ENCODE measurements at regions of chr3 and their contacts with region 1.

Region 1: DNA sequence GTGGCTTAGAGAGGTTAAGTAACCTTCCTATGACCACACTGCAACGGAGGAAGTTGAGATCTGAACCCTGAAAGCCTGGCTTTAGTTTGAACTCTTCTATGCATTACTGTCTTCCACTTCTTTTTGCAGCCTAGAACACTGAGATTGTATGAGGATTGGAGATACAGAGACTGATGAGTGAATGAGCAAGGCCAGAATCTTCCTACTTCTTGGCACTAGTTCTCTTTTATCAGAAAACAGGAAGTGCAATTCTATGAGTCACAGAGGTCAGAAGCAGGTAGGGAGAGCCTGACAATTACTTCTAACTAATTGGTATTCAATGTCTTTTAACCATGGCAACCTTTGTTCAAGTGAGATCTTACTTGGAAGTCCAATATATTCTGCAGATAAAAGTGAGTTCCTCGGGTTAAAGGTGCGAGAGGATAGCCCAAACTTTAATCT is 219.0 kb downstream of the SHQ1 start:
- DNase-seq: no peak
- H3K4me3 Mint-ChIP-seq: peak overlapping the region; percentile 5
- H3K27ac Mint-ChIP-seq: peak overlapping the region; percentile 86
- H3K4me1 Mint-ChIP-seq: peaks cover 58% of the 10 kb centered on the region
- H3K27me3 Mint-ChIP-seq: no peaks in the 10 kb centered on the region

Region 2: GRCh38 chr3:71725279-71725991 is 903.8 kb before region 1 on chr3 and contains the start of gene EIF4E3:
- intact Hi-C with region 1: loop called (anchors 10 kb)
- DNase-seq: peak; percentile 28
- H3K4me3 Mint-ChIP-seq: peak within 1 kb of the TSS; percentile 88
- H3K27ac Mint-ChIP-seq: peak within 1 kb of the TSS; percentile 89
- H3K4me1 Mint-ChIP-seq: peaks cover 63% of the 10 kb centered on the region
- H3K27me3 Mint-ChIP-seq: peaks cover 2% of the 10 kb centered on the region
- total RNA-seq, gene EIF4E3: 17.3 and 17.9 TPM in 2 replicates

Region 3: GRCh38 chr3:72339116-72340030 is 289.8 kb before region 1 on chr3:
- intact Hi-C with region 1: loop called (anchors 2 kb)
- DNase-seq: no peak
- H3K4me3 Mint-ChIP-seq: no peak overlapping the region
- H3K27ac Mint-ChIP-seq: no peak overlapping the region
- H3K4me1 Mint-ChIP-seq: peaks cover 29% of the 10 kb centered on the region
- H3K27me3 Mint-ChIP-seq: no peaks in the 10 kb centered on the region

Region 4: GRCh38 chr3:72426618-72427397 is 202.4 kb before region 1 on chr3:
- intact Hi-C with region 1: loop called (anchors 2 kb)
- DNase-seq: no peak
- H3K4me3 Mint-ChIP-seq: peak overlapping the region; percentile 67
- H3K27ac Mint-ChIP-seq: peak overlapping the region; percentile 96
- H3K4me1 Mint-ChIP-seq: peaks cover 71% of the 10 kb centered on the region
- H3K27me3 Mint-ChIP-seq: no peaks in the 10 kb centered on the region

Region 5: DNA sequence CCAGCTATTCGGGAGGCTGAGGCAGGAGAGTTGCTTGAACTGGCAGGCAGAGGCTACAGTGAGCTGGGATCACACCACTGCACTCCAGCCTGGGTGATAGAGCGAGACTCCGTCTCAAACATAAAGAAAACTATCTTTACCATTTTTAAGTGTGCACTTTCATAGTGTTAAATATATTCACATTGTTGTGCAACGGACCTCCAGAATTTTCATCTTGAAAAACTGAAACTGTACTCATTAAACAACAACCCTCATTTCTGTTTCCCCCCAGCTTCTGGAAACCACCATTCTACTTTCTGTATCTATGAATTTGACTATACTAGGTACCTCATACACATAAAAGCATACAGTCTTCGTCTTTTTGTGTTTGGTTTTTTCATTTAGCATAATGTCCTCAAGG is 156.1 kb before region 1 on chr3:
- intact Hi-C with region 1: loop called (anchors 1 kb)
- DNase-seq: no peak
- H3K4me3 Mint-ChIP-seq: no peak overlapping the region
- H3K27ac Mint-ChIP-seq: peak overlapping the region; percentile 84
- H3K4me1 Mint-ChIP-seq: peaks cover 47% of the 10 kb centered on the region
- H3K27me3 Mint-ChIP-seq: no peaks in the 10 kb centered on the region

Region 6: GRCh38 chr3:72523429-72524151 is 105.6 kb before region 1 on chr3:
- intact Hi-C with region 1: loop called (anchors 1 kb)
- DNase-seq: no peak
- H3K4me3 Mint-ChIP-seq: no peak overlapping the region
- H3K27ac Mint-ChIP-seq: peak overlapping the region; percentile 51
- H3K4me1 Mint-ChIP-seq: peaks cover 44% of the 10 kb centered on the region
- H3K27me3 Mint-ChIP-seq: no peaks in the 10 kb centered on the region

Region 7: GRCh38 chr3:72756900-72757299 is 127.7 kb after region 1 on chr3:
- intact Hi-C with region 1: loop called (anchors 2 kb)
- DNase-seq: peak; percentile 53
- H3K4me3 Mint-ChIP-seq: no peak overlapping the region
- H3K27ac Mint-ChIP-seq: peak overlapping the region; percentile 45
- H3K4me1 Mint-ChIP-seq: peaks cover 34% of the 10 kb centered on the region
- H3K27me3 Mint-ChIP-seq: no peaks in the 10 kb centered on the region

Region 8: GRCh38 chr3:73070675-73071575 is 441.7 kb after region 1 on chr3:
- intact Hi-C with region 1: no loop called
- DNase-seq: no peak
- H3K4me3 Mint-ChIP-seq: no peak overlapping the region
- H3K27ac Mint-ChIP-seq: no peak overlapping the region
- H3K4me1 Mint-ChIP-seq: peaks cover 32% of the 10 kb centered on the region
- H3K27me3 Mint-ChIP-seq: no peaks in the 10 kb centered on the region

Measured in activated T-helper 2 cell treated with anti-CD3 and anti-CD28 coated beads, Interferon-gamma antibody, Interleukin-2, Interleukin-4, amounts not matched to agents 10 μg/mL and 5 μg/mL and 100 μg/mL, durations not matched to agents 14 hours and 24 hours and 36 hours (primary cell).